PC-9 (cell line): ENCODE measurements at regions of chr4 and their contacts with region 1.

Region 1: GRCh38 chr4:41394362-41394960 is 137.7 kb downstream of the UCHL1 start:
- DNase-seq: peak in 1 of 2 experiments; percentile 64
- H3K4me3 ChIP-seq: no peak overlapping the region
- H3K27ac ChIP-seq: peak overlapping the region; percentile 28; the same call in 1 of the 2 replicates
- H3K4me1 ChIP-seq: peaks cover 16% of the 10 kb centered on the region
- H3K27me3 ChIP-seq: no peaks in the 10 kb centered on the region
- CTCF ChIP-seq: no peak

Region 2: DNA sequence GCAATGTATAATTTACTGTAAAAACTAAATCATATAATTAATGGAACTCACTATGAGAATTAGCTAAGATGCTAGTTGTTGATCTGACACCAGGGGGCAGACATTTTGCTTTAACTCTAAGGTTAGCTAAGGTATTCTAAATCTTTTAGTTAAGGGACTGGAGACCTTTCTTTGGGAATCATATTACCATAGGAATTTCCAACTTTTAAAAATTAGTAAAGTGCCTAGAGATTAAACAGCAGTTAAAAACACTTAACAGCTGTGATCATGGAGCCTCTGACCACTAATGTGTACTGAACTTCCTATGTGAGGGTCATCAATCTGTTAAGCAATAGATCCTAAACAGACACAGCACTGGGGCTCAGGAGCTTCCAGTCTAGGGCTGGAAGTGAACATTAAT is 418.1 kb before region 1 on chr4:
- CTCF ChIA-PET with region 1: interaction called, 12 read pairs
- POLR2A ChIA-PET with region 1: no interaction called
- intact Hi-C with region 1: no loop called
- DNase-seq: peak; percentile 38 to 63
- H3K4me3 ChIP-seq: no peak overlapping the region
- H3K27ac ChIP-seq: no peak overlapping the region
- H3K4me1 ChIP-seq: peaks cover 4% of the 10 kb centered on the region; the same call in 1 of the 2 replicates
- H3K27me3 ChIP-seq: no peaks in the 10 kb centered on the region
- CTCF ChIP-seq: peak; percentile 86

Region 3: DNA sequence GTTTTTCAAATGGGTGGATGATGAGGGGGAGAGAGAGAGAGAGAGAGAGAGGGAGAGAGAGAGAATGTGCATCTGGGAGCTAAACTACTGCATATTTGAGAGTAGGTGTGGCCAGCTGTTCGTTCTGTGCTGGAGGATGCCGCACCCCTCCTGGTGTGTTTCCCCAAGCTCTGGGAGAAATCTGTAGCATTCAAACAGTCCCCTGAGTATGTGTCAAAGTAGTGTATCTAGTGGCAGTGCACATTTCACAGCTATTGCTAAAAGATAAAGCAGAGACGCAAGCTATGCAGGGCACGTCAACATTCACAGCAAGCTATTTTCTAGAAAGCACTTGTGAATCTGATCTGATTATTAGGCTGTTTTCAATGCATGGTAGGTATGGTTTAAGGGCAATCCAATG is 60.0 kb after region 1 on chr4:
- CTCF ChIA-PET with region 1: no interaction called
- POLR2A ChIA-PET with region 1: interaction called, 11 read pairs
- intact Hi-C with region 1: no loop called
- DNase-seq: peak in 1 of 2 experiments; percentile 24
- H3K4me3 ChIP-seq: no peak overlapping the region
- H3K27ac ChIP-seq: no peak overlapping the region
- H3K4me1 ChIP-seq: peaks cover 25% of the 10 kb centered on the region
- H3K27me3 ChIP-seq: no peaks in the 10 kb centered on the region
- CTCF ChIP-seq: no peak